ENCODE measurements at regions of chr1 and their contacts with region 1.

Region 1: DNA sequence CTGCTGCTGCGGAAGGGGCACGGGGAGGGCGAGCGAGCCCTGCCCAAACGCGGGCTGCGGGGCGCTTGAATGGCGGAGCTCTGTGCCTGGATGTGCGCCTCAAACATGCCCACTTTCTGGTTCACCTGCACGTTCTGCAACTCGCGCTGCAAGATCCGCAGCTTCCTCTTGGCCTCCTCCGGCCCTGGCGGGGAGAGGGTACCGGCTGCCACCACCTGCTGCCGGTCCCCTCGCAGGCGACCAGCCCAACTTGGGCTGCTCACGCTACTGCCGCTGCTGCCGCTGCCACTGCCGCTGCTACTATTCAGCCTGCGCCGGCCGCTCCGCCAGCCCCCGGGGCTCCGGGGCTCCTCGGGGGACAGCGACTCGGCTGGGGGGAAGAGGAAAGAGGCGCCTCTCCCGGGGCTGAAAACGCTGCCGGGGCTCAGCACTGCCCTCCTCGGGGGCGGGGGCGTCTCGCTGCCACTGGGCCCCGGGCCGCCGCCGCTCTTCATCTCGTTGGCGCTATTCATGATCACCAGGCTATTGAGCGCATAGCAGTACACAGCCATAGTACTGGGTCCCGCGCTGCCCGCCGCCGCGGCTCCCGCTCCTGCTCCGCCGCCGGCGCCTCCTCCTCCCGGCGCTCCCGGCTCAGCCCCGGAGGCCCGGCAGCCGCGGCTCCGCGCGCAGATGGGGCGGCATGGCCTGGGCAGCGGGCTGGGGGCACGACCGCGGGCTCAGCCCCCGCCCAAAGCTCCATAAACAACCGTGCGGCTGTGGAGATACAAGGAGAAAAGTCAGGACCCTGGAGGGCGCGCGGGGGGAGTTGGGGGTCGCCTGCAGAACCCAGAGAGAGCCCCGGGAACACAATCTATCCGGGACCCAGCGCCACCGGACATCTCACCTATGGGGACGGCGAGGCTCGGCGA is 1.9 kb downstream of the ITPKB start:
- DNase-seq: peak; percentile 69
- H3K4me3 Mint-ChIP-seq: peak overlapping the region; percentile 76
- H3K27ac Mint-ChIP-seq: peak overlapping the region; percentile 92
- H3K4me1 Mint-ChIP-seq: peaks cover 52% of the 10 kb centered on the region
- H3K27me3 Mint-ChIP-seq: no peaks in the 10 kb centered on the region

Region 2: DNA sequence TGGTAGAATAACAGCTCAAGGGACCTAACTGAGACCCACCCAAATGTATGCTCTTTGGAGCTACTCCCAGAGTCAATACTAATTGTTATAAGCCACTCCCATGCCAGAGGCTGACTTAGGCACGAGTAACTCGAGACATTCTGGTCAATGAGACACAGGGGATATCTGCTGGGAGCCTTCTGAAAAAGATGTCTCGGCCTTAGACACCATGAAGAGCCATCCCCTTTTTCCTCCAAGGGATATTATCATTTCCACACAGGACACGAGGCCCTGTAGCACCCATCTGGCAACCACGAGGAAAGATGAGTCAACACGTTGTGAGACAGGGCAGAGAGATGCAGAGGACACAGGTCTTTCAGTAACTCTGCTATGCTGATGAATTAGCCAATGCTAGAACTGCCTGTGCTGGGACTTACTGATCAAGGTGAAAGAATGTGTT is 28.8 kb before region 1 on chr1:
- CTCF ChIA-PET with region 1: interaction called, 66 read pairs
- DNase-seq: no peak
- H3K4me3 Mint-ChIP-seq: no peak overlapping the region
- H3K27ac Mint-ChIP-seq: peak overlapping the region; percentile 90
- H3K4me1 Mint-ChIP-seq: peaks cover 84% of the 10 kb centered on the region
- H3K27me3 Mint-ChIP-seq: peaks cover 8% of the 10 kb centered on the region

Region 3: DNA sequence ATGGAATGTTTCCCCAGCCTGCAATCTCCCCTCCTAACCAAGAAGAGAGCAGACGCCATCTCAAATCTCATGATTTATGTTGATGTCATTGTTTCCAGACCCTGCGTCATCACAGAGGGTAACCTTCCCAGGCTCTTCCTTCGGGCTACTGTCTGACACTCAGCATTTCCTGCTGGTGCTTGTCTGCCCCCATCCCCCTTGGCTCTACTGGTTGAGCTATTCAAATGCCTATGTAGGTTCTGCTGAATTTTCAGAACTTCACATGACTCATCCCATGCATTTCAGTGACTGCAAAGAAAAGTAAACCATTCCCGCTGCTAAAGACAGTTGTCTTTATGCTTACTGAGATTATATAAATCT is 26.7 kb after region 1 on chr1:
- CTCF ChIA-PET with region 1: no interaction called
- DNase-seq: no peak
- H3K4me3 Mint-ChIP-seq: no peak overlapping the region
- H3K27ac Mint-ChIP-seq: no peak overlapping the region
- H3K4me1 Mint-ChIP-seq: peaks cover 22% of the 10 kb centered on the region
- H3K27me3 Mint-ChIP-seq: peaks cover 18% of the 10 kb centered on the region